ENCODE measurements at regions of chr6 and their contacts with region 1.

Region 1: DNA sequence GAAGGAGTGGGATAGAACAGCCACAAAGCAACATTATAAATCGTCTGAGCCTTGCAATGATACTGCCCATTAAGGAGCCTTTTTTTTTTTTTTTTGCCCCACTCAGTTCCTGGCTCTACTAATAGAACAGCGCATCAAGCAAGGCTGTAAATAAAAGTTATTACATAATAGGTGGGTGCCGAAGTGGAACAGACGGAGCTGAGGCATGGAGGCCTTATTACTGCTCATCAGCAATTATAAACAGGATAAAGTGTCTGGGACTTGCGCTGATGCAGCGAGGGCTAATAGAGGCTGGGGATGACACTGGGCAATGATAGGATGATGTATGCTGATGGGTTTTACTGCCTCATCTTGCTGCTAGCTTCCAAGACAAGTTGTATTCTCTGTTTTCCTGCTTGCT is 272.1 kb downstream of the ZFAND3 start:
- DNase-seq: no peak
- ATAC-seq: no peak
- H3K4me3 ChIP-seq: no peak overlapping the region
- H3K27ac ChIP-seq: no peak overlapping the region
- H3K4me1 ChIP-seq: peaks cover 0 to 25% (median 0%) of the 10 kb centered on the region in 12 donors
- H3K27me3 ChIP-seq: no peaks in the 10 kb centered on the region
- CTCF ChIP-seq: no peak
- POLR2A ChIP-seq: no peak

Region 2: DNA sequence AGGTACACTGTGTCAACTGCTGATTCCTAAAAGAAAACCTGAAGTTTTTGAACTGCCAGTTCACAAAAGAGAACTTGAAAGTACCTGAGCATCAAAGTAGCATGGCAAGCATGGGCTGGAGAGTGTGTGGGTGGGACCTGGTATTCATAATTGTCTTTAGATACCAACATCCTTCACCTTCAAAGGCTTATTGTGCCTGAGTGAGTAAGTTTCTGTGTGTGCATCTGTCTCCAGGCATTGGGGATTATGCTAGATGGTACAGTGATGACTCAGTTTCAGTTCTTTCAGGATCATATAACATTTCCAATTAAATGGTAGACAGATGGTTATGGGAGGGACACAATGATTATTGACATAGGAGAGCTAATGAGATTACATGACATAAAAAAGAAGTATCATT is 33.6 kb before region 1 on chr6:
- intact Hi-C with region 1: loop called in 1 of 10 experiments (anchors 2 kb)
- DNase-seq: no peak
- ATAC-seq: no peak
- H3K4me3 ChIP-seq: no peak overlapping the region
- H3K27ac ChIP-seq: no peak overlapping the region
- H3K4me1 ChIP-seq: peaks cover 0 to 18% (median 5%) of the 10 kb centered on the region in 12 donors
- H3K27me3 ChIP-seq: no peaks in the 10 kb centered on the region
- CTCF ChIP-seq: no peak
- POLR2A ChIP-seq: no peak